Breast epithelium (tissue), 4 donors: ENCODE measurements at regions of chr17 and their contacts with region 1.

Region 1: DNA sequence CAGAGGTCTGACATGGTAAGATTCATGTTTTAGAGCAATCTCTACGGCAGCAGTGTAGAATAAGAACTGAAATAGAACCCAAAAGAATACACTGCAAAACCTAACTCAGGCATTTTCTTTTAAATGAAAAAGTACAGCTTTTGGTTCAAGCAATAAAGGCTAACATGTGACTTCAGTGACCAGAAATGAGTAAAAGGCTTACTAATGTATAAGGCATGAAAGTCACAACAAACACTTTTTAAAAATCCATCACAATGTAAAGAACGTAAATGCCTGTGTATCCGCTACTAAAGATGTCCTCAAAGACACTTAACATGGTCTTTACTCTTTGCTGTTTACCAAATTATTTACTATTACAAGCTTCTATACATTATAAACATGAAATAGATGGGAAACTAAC is 16.6 kb downstream of the KIAA0753 start:
- DNase-seq: no peak
- H3K4me3 ChIP-seq: no peak overlapping the region
- H3K27ac ChIP-seq: no peak overlapping the region
- H3K4me1 ChIP-seq: no peaks in the 10 kb centered on the region
- H3K27me3 ChIP-seq: no peaks in the 10 kb centered on the region
- CTCF ChIP-seq: no peak
- POLR2A ChIP-seq: no peak

Region 2: DNA sequence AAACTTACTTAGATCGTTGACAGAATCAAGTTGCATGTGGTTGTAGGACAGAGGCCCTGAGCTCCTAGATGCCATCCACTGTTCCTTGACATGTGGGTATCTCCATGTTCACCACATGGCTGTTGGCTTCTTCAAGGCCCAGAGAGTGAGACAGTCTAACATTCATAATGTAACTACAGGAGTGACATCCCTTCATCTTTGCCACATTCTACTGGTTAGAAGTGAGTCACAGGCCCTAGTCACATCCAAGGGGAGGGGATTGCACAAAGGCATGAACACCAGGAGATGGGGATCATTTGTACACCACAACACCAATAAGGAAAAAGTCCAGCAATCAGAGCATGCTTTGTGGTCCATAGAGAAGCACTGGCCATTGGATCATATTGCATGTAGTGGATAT is 497.2 kb before region 1 on chr17:
- intact Hi-C with region 1: no loop called
- DNase-seq: no peak
- H3K4me3 ChIP-seq: no peak overlapping the region
- H3K27ac ChIP-seq: no peak overlapping the region
- H3K4me1 ChIP-seq: no peaks in the 10 kb centered on the region
- H3K27me3 ChIP-seq: no peaks in the 10 kb centered on the region
- CTCF ChIP-seq: no peak
- POLR2A ChIP-seq: no peak

Region 3: GRCh38 chr17:6666077-6666521 is 42.2 kb after region 1 on chr17:
- intact Hi-C with region 1: loop called (anchors 2 kb)
- DNase-seq: peak; percentile 69 to 75
- H3K4me3 ChIP-seq: no peak overlapping the region
- H3K27ac ChIP-seq: no peak overlapping the region
- H3K4me1 ChIP-seq: no peaks in the 10 kb centered on the region
- H3K27me3 ChIP-seq: no peaks in the 10 kb centered on the region
- CTCF ChIP-seq: peak; percentile 70 to 88 (median 87)
- POLR2A ChIP-seq: no peak

Region 4: GRCh38 chr17:7394452-7395191 is 770.7 kb after region 1 on chr17 and contains the start of gene PLSCR3:
- intact Hi-C with region 1: loop called (anchors 5 kb)
- DNase-seq: peak; percentile 79 to 80
- H3K4me3 ChIP-seq: peak within 1 kb of the TSS; percentile 85 to 90 (median 90)
- H3K27ac ChIP-seq: peak within 1 kb of the TSS; percentile 89 to 94
- H3K4me1 ChIP-seq: peaks cover 0 to 7% of the 10 kb centered on the region in 2 donors
- H3K27me3 ChIP-seq: no peaks in the 10 kb centered on the region
- CTCF ChIP-seq: peak; percentile 55 to 64 (median 56)
- POLR2A ChIP-seq: peak; percentile 27
- total RNA-seq, gene PLSCR3: 16.0 to 24.3 (median 19.0) TPM